Activated CD8-positive, alpha-beta T cell treated with anti-CD3 and anti-CD28 coated beads, Interleukin-2, amount 10 ng/mL, durations not matched to agents 7 days and 5 days (primary cell): ENCODE measurements at regions of chr16 and their contacts with region 1.

Region 1: GRCh38 chr16:28140788-28141618 is 70.8 kb downstream of the XPO6 start:
- DNase-seq: peak; percentile 88
- ATAC-seq: peak; percentile 66
- H3K4me3 Mint-ChIP-seq: peak overlapping the region; percentile 71
- H3K27ac Mint-ChIP-seq: peak overlapping the region; percentile 95
- H3K4me1 Mint-ChIP-seq: peaks cover 89% of the 10 kb centered on the region
- H3K27me3 Mint-ChIP-seq: no peaks in the 10 kb centered on the region

Region 2: GRCh38 chr16:27999687-28000086 is 141.3 kb before region 1 on chr16:
- CTCF ChIA-PET with region 1: no interaction called
- POLR2A ChIA-PET with region 1: no interaction called
- DNase-seq: no peak
- ATAC-seq: no peak
- H3K4me3 Mint-ChIP-seq: no peak overlapping the region
- H3K27ac Mint-ChIP-seq: no peak overlapping the region
- H3K4me1 Mint-ChIP-seq: peaks cover 19% of the 10 kb centered on the region
- H3K27me3 Mint-ChIP-seq: peaks cover 3% of the 10 kb centered on the region

Region 3: DNA sequence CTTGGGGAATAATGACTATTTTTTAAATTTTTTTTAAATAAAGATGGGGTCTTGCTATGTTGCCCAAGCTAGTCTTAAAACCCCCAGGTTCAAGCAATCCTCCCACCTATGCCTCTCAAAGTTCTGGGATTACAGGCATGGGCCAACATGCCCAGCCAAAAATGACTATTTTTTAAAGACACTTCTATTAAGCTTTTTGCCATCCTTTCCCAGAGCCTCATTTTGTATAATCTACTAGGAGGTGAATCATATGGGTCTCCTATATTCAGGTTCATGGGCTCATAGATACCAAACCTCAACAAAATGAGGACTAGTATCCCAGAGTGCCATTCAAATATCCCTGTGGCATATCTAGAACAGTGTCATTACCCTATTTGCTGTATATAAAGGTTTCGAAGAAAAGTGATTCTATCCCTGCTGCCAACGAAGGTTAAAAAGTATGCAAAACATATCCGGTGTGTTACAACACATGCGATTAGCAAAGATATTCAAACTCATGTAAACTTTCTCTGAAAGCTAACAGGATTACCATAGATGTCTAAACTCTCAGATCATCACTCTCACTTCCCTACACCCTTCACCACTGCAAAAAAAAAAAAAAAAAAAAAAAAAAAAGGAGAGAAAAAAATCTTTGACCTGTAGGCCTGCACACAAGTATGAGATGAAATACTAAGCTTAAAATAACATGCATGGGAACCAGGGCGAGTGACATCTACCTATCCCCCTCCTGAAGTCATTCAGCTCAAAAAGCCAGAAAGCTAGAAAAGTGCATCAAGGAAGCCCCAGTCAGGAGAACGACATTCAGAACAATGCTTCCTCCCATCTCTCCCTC is 47.3 kb after region 1 on chr16:
- CTCF ChIA-PET with region 1: interaction called, 24 read pairs
- POLR2A ChIA-PET with region 1: interaction called, 33 read pairs
- DNase-seq: no peak
- ATAC-seq: no peak
- H3K4me3 Mint-ChIP-seq: peak overlapping the region; percentile 66
- H3K27ac Mint-ChIP-seq: peak overlapping the region; percentile 82
- H3K4me1 Mint-ChIP-seq: peaks cover 89% of the 10 kb centered on the region
- H3K27me3 Mint-ChIP-seq: no peaks in the 10 kb centered on the region

Region 4: GRCh38 chr16:28193530-28194423 is 52.8 kb after region 1 on chr16:
- CTCF ChIA-PET with region 1: interaction called, 24 read pairs
- POLR2A ChIA-PET with region 1: interaction called, 33 read pairs
- DNase-seq: no peak
- ATAC-seq: peak; percentile 52
- H3K4me3 Mint-ChIP-seq: peak overlapping the region; percentile 78
- H3K27ac Mint-ChIP-seq: peak overlapping the region; percentile 93
- H3K4me1 Mint-ChIP-seq: peaks cover 79% of the 10 kb centered on the region
- H3K27me3 Mint-ChIP-seq: no peaks in the 10 kb centered on the region